ENCODE measurements at regions of chr5 and their contacts with region 1.

Region 1: GRCh38 chr5:149561848-149562247 is 10.6 kb upstream of the CSNK1A1 start:
- DNase-seq: peak; percentile 97
- H3K4me3 Mint-ChIP-seq: peak overlapping the region; percentile 50
- H3K27ac Mint-ChIP-seq: peak overlapping the region; percentile 82
- H3K4me1 Mint-ChIP-seq: peaks cover 38% of the 10 kb centered on the region
- H3K27me3 Mint-ChIP-seq: no peaks in the 10 kb centered on the region
- CTCF ChIP-seq: no peak

Region 2: GRCh38 chr5:149345147-149345875 is 216.5 kb before region 1 on chr5 and contains the start of gene GRPEL2:
- CTCF ChIA-PET with region 1: interaction called, 4 read pairs
- POLR2A ChIA-PET with region 1: interaction called, 19 read pairs
- intact Hi-C with region 1: no loop called
- DNase-seq: peak; percentile 99
- H3K4me3 Mint-ChIP-seq: peak within 1 kb of the TSS; percentile 96
- H3K27ac Mint-ChIP-seq: peak within 1 kb of the TSS; percentile 94
- H3K4me1 Mint-ChIP-seq: peaks cover 22% of the 10 kb centered on the region
- H3K27me3 Mint-ChIP-seq: no peaks in the 10 kb centered on the region
- CTCF ChIP-seq: no peak
- total RNA-seq, gene GRPEL2: 69.5 and 86.6 TPM in 2 replicates

Region 3: GRCh38 chr5:149387081-149387631 is 174.7 kb before region 1 on chr5:
- CTCF ChIA-PET with region 1: interaction called, 54 read pairs
- POLR2A ChIA-PET with region 1: interaction called, 12 read pairs
- intact Hi-C with region 1: loop called (anchors 1 kb)
- DNase-seq: no peak
- H3K4me3 Mint-ChIP-seq: no peak overlapping the region
- H3K27ac Mint-ChIP-seq: no peak overlapping the region
- H3K4me1 Mint-ChIP-seq: no peaks in the 10 kb centered on the region
- H3K27me3 Mint-ChIP-seq: no peaks in the 10 kb centered on the region
- CTCF ChIP-seq: no peak

Region 4: DNA sequence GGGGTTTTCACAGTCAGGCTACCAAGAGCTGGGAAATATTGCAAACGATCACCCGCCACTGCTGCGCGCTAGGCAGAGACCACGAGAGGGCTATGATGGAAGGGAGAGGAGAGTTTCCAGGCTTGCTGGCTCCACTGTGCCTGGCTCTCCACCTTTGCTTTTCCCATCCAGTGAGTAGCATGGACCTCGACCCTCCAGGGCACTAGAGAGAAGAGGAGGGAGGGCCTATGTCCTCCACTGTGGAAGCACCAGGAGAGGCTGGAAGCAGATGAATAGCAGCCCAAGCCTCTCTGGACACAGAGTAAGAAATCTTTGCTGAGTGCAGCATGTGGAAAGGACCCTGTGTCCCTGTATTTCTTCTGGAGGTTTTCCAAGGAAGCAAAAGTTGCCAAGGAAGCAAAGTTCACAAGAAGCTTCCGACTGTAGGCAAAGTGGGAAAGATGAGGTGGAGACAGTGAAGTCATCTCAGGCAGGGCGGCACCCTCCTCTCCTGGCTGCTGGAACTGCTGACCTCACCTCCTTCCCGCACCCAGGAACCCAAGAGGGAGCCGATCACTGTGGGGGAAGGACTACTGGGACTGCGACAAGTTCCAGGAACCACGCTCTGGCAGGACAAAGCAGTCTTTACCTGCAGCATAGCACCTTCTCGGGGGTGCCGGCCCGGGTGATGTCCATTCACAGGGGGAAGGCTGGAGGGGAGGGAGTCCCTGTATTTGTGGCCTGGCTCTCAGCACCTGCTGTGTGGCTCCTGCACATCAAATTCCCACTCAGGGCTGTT is 90.3 kb before region 1 on chr5:
- CTCF ChIA-PET with region 1: interaction called, 5 read pairs
- POLR2A ChIA-PET with region 1: interaction called, 11 read pairs
- intact Hi-C with region 1: no loop called
- DNase-seq: peak; percentile 63
- H3K4me3 Mint-ChIP-seq: no peak overlapping the region
- H3K27ac Mint-ChIP-seq: peak overlapping the region; percentile 64
- H3K4me1 Mint-ChIP-seq: peaks cover 28% of the 10 kb centered on the region
- H3K27me3 Mint-ChIP-seq: no peaks in the 10 kb centered on the region
- CTCF ChIP-seq: no peak

Region 5: DNA sequence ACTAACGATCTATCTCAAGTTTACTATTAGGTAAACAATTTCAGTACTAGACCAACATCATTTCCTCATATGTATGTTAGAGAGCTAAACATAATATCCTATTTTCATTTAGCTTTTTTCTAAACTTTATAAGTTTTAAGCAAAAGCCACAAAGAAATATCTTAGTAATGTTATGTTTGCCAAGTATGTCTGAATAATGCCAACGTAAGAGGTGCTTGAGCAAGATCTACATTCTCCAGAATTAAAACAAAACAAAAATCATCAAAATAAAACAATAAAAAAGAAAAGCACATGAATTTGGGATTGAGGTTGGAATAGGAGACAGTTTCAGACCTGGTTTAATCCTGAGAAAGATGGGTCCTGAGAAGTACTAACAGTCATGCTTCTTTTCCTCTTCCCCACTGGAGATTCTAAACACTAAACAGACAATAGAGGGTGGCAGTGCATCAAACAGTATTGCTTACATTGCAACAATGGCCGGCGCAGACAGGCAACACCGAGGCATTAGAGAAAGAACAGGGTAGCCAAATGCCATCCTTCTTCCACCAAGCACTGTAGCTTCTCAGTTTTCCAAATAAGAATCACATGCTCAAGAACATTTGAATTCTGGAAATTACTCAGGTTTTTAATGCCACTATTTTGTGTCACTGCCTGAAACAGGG is 44.3 kb before region 1 on chr5:
- CTCF ChIA-PET with region 1: interaction called, 18 read pairs
- POLR2A ChIA-PET with region 1: interaction called, 27 read pairs
- intact Hi-C with region 1: loop called (anchors 5 kb)
- DNase-seq: peak; percentile 43
- H3K4me3 Mint-ChIP-seq: peak overlapping the region; percentile 36
- H3K27ac Mint-ChIP-seq: peak overlapping the region; percentile 52
- H3K4me1 Mint-ChIP-seq: peaks cover 63% of the 10 kb centered on the region
- H3K27me3 Mint-ChIP-seq: no peaks in the 10 kb centered on the region
- CTCF ChIP-seq: no peak

Region 6: GRCh38 chr5:149581192-149581861 is 19.5 kb after region 1 on chr5 and contains the start of gene ARHGEF37:
- CTCF ChIA-PET with region 1: interaction called, 41 read pairs
- POLR2A ChIA-PET with region 1: interaction called, 85 read pairs
- intact Hi-C with region 1: no loop called
- DNase-seq: peak; percentile 83
- H3K4me3 Mint-ChIP-seq: peak within 1 kb of the TSS; percentile 75
- H3K27ac Mint-ChIP-seq: peak within 1 kb of the TSS; percentile 76
- H3K4me1 Mint-ChIP-seq: peaks cover 26% of the 10 kb centered on the region
- H3K27me3 Mint-ChIP-seq: no peaks in the 10 kb centered on the region
- CTCF ChIP-seq: no peak
- total RNA-seq, gene ARHGEF37: 3.9 and 5.1 TPM in 2 replicates

Region 7: DNA sequence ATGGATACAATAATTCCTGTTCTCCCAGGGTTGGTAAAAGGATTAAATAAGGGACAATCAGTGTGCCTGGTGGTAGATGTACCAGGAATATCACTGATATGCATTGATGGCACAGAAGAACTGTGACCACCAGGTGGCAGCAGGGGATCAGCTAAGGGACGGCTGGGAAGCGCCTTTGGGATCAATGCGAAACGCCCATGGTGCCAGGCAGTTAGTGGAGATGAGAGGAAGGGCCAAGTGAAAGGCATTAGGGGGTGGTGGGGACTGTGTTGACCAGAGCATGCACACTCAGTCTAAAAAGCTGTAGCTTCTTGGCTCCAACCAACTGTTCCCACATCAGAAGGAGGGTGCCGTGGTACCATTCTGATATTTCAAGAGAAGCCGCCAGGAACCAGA is 75.0 kb after region 1 on chr5:
- CTCF ChIA-PET with region 1: interaction called, 5 read pairs
- POLR2A ChIA-PET with region 1: interaction called, 24 read pairs
- intact Hi-C with region 1: no loop called
- DNase-seq: peak; percentile 90
- H3K4me3 Mint-ChIP-seq: no peak overlapping the region
- H3K27ac Mint-ChIP-seq: no peak overlapping the region
- H3K4me1 Mint-ChIP-seq: peaks cover 47% of the 10 kb centered on the region
- H3K27me3 Mint-ChIP-seq: no peaks in the 10 kb centered on the region
- CTCF ChIP-seq: peak; percentile 98

Region 8: DNA sequence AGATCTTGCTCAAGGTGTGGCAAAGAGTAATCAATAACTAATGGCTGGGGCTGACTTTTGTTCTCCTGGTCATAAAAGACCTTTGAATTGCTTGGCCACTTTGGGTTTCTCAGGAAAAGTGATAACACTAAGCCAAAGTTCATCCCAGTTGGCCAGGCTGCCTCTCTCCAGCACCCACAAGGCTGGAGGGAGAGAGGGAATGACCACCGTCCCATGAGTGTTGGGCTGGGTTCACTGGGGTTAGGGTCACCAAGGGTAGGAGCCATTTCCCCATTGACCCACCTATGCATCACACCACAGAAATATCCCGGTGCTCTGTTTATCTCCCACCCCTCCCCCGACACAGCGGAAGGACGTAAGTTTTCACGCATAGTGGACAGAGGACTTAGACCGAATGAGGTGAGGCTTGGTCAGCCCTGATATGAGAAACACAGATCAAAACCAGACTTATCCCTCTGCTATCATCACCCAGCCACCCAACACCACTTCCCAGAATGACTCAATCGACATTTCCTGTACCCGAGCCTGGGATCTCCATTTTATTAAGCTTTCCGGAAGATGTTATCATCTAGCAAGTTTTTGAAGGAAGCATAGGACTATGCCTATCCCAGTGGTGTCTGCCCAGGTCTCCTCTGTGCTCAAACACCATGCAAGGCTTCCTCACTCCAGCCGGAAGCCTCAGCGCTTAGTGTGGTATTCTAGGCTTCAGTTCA is 141.2 kb after region 1 on chr5:
- CTCF ChIA-PET with region 1: no interaction called
- POLR2A ChIA-PET with region 1: no interaction called
- intact Hi-C with region 1: no loop called
- DNase-seq: no peak
- H3K4me3 Mint-ChIP-seq: no peak overlapping the region
- H3K27ac Mint-ChIP-seq: no peak overlapping the region
- H3K4me1 Mint-ChIP-seq: no peaks in the 10 kb centered on the region
- H3K27me3 Mint-ChIP-seq: peaks cover 65% of the 10 kb centered on the region
- CTCF ChIP-seq: no peak

Region 9: GRCh38 chr5:149719678-149720077 is 157.8 kb after region 1 on chr5:
- CTCF ChIA-PET with region 1: no interaction called
- POLR2A ChIA-PET with region 1: no interaction called
- intact Hi-C with region 1: no loop called
- DNase-seq: peak; percentile 86
- H3K4me3 Mint-ChIP-seq: no peak overlapping the region
- H3K27ac Mint-ChIP-seq: no peak overlapping the region
- H3K4me1 Mint-ChIP-seq: peaks cover 16% of the 10 kb centered on the region
- H3K27me3 Mint-ChIP-seq: peaks cover 20% of the 10 kb centered on the region
- CTCF ChIP-seq: no peak

Measured in MCF 10A (cell line).